CD8-positive, alpha-beta memory T cell (primary cell): ENCODE measurements at regions of chr2 and their contacts with region 1.

Region 1: DNA sequence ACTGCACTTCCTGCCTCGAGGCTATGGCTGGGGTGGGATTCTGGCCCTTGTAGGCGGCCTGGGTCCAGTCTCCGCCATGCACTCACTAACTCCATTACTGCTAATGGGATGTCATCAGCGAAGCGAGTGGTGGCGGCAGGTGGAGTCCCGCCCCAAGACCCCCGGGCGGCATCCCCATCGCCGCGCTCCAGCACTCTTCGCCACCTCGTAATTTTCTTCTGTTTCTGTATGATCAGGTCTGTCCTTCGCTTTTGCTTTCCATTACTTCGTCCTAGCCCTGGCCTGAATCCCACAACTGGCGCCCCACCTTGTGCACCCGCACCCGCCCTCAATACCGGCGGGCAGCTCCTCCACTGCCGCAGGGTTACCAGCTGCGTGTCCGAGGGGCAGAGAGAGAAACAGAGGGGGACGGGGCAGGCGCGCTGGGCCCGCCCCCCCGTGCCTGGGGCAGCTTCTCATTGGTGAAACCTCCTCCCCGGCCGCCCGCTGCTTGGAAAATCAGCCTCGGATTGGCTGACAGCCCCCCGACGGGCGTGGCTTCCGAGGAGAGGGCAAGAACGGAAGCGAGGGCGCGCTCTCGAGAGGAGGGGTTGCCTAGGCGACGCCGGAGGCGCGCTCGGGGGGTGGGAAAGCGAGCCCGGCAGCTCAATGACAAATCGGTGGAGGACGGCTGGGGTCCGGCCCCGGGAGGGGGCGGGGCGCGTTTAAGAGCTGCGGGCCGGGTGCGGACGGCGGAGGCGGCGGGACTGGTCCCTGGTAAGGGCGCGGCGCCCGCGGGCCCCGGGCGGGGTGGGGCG is at the start of gene RALB:
- DNase-seq: peak; percentile 97 to 99 (median 99)
- H3K4me3 ChIP-seq: peak within 1 kb of the TSS; percentile 97
- H3K4me3 Mint-ChIP-seq: peak within 1 kb of the TSS; percentile 98 to 99 (median 99)
- H3K27ac ChIP-seq: peak within 1 kb of the TSS; percentile 79
- H3K27ac Mint-ChIP-seq: peak within 1 kb of the TSS; percentile 85 to 99 (median 96)
- H3K4me1 ChIP-seq: peaks cover 21% of the 10 kb centered on the region
- H3K4me1 Mint-ChIP-seq: peaks cover 29 to 52% (median 51%) of the 10 kb centered on the region in 3 donors
- H3K27me3 ChIP-seq: no peaks in the 10 kb centered on the region
- H3K27me3 Mint-ChIP-seq: peaks cover 16 to 22% of the 10 kb centered on the region in 2 donors
- total RNA-seq, gene RALB: 37.3 to 39.6 TPM

Region 2: GRCh38 chr2:120195553-120195952 is 56.9 kb before region 1 on chr2:
- CTCF ChIA-PET with region 1: no interaction called
- POLR2A ChIA-PET with region 1: no interaction called
- DNase-seq: no peak
- H3K4me3 ChIP-seq: no peak overlapping the region
- H3K4me3 Mint-ChIP-seq: no peak overlapping the region
- H3K27ac ChIP-seq: no peak overlapping the region
- H3K27ac Mint-ChIP-seq: no peak overlapping the region
- H3K4me1 ChIP-seq: no peaks in the 10 kb centered on the region
- H3K4me1 Mint-ChIP-seq: no peaks in the 10 kb centered on the region
- H3K27me3 ChIP-seq: no peaks in the 10 kb centered on the region
- H3K27me3 Mint-ChIP-seq: peaks cover 2 to 5% of the 10 kb centered on the region in 2 donors

Region 3: DNA sequence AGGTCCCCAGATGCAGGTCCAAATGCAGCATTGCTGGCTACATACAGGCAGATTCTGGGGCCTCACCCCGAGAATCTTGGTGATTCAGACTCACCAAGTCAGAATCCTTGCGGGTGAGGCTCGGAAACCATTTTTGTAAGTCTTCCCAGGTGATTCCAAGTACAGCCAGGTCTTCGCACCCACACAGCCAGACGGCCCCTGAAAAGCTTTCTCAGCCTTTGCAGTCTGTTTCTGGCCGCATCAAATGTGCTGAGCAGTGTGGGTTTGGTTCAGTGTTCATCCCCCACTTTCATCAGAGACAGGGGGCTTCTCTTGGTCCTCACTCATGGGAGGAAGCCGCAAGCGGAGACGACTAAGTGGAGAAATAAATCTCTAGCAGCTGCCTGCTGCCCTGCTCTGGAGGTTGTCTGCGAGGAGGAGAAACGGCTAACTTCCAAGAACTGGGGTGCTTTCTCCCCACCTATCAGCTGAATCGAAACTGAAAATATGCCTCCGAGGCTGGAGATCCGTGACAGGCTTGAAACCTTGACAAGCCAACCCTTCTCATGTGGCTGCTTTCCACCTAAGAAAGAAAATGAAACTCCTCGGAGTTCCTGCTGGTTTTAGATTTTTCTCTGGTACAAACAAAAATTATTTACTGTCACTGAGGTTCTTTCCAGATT is 20.3 kb before region 1 on chr2:
- CTCF ChIA-PET with region 1: interaction called, 9 read pairs
- POLR2A ChIA-PET with region 1: interaction called, 23 read pairs
- DNase-seq: peak; percentile 35 to 77 (median 74)
- H3K4me3 ChIP-seq: peak overlapping the region; percentile 67
- H3K4me3 Mint-ChIP-seq: peak overlapping the region; percentile 91 to 99 (median 95)
- H3K27ac ChIP-seq: peak overlapping the region; percentile 58
- H3K27ac Mint-ChIP-seq: peak overlapping the region; percentile 91 to 99 (median 96)
- H3K4me1 ChIP-seq: peaks cover 39% of the 10 kb centered on the region
- H3K4me1 Mint-ChIP-seq: peaks cover 42 to 58% (median 57%) of the 10 kb centered on the region in 3 donors
- H3K27me3 ChIP-seq: no peaks in the 10 kb centered on the region
- H3K27me3 Mint-ChIP-seq: peaks cover 0 to 1% of the 10 kb centered on the region in 2 donors